Aorta (tissue), 5 donors: ENCODE measurements at regions of chr16 and their contacts with region 1.

Region 1: GRCh38 chr16:81360135-81360534 is 45.4 kb downstream of the GAN start:
- DNase-seq: no peak
- ATAC-seq: no peak
- H3K4me3 ChIP-seq: no peak overlapping the region
- H3K27ac ChIP-seq: no peak overlapping the region
- H3K4me1 ChIP-seq: no peaks in the 10 kb centered on the region
- H3K27me3 ChIP-seq: no peaks in the 10 kb centered on the region

Region 2: GRCh38 chr16:81293909-81294823 is 66.0 kb before region 1 on chr16:
- intact Hi-C with region 1: no loop called
- DNase-seq: no peak
- ATAC-seq: no peak
- H3K4me3 ChIP-seq: no peak overlapping the region
- H3K27ac ChIP-seq: no peak overlapping the region
- H3K4me1 ChIP-seq: no peaks in the 10 kb centered on the region
- H3K27me3 ChIP-seq: no peaks in the 10 kb centered on the region

Region 3: DNA sequence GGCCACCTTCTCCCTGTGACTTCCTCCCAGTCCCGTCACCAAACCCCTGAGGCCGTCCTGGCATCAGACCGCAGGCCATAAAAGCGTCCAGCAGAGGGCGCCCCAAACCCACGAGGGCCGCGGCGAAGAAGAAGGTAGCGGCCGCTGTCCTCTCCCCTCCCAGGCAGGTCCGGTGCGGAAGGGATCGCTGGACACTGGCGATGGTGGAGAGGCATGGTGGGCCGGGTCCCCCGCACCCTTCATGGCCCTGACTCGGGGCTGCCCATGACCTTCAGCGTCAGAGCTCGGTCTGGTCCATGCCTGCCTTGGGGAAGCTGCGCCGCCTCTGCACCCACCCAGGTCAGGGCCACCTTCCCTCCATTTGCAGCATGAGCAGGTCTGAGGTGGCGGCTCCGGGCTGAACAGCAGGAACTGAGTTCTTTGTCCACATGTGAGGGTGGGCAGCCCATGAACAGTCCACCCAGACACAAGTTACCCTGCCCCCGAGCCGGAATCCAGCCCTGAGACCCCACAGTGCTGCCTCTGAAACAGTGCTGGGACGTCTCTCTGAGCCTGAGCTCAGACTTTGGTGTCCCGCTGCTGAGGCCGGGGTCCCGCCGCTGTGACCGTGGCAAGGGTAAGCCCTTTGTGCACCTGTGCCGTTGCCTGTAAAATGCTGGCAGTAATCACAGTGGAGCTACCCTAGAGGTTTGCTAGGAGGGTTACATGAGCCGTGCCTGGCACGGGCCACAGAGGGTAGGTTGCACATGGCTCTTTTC is 43.7 kb after region 1 on chr16:
- intact Hi-C with region 1: loop called in 1 of 2 experiments (anchors 5 kb)
- DNase-seq: peak; percentile 89 to 95
- ATAC-seq: peak; percentile 90
- H3K4me3 ChIP-seq: no peak overlapping the region
- H3K27ac ChIP-seq: no peak overlapping the region
- H3K4me1 ChIP-seq: no peaks in the 10 kb centered on the region
- H3K27me3 ChIP-seq: peaks cover 0 to 4% of the 10 kb centered on the region in 2 donors

Region 4: GRCh38 chr16:81429045-81429521 is 68.9 kb after region 1 on chr16:
- intact Hi-C with region 1: no loop called
- DNase-seq: peak in 1 of 2 donors; percentile 64
- ATAC-seq: no peak
- H3K4me3 ChIP-seq: no peak overlapping the region
- H3K27ac ChIP-seq: no peak overlapping the region
- H3K4me1 ChIP-seq: no peaks in the 10 kb centered on the region
- H3K27me3 ChIP-seq: no peaks in the 10 kb centered on the region

Region 5: GRCh38 chr16:81551151-81551808 is 191.1 kb after region 1 on chr16:
- intact Hi-C with region 1: no loop called
- DNase-seq: peak; percentile 42 to 50
- ATAC-seq: no peak
- H3K4me3 ChIP-seq: no peak overlapping the region
- H3K27ac ChIP-seq: no peak overlapping the region
- H3K4me1 ChIP-seq: no peaks in the 10 kb centered on the region
- H3K27me3 ChIP-seq: no peaks in the 10 kb centered on the region